ENCODE measurements at regions of chr7 and their contacts with region 1.

Region 1: GRCh38 chr7:39517240-39517639 is 49.0 kb upstream of the YAE1 start:
- DNase-seq: no peak
- ATAC-seq: no peak
- H3K4me3 ChIP-seq: no peak overlapping the region
- H3K27ac ChIP-seq: no peak overlapping the region
- H3K4me1 ChIP-seq: no peaks in the 10 kb centered on the region
- H3K27me3 ChIP-seq: no peaks in the 10 kb centered on the region; a peak in 1 of 4 replicates
- CTCF ChIP-seq: no peak
- EP300 ChIP-seq: no peak
- POLR2A ChIP-seq: no peak
- RAD21 ChIP-seq: no peak

Region 2: DNA sequence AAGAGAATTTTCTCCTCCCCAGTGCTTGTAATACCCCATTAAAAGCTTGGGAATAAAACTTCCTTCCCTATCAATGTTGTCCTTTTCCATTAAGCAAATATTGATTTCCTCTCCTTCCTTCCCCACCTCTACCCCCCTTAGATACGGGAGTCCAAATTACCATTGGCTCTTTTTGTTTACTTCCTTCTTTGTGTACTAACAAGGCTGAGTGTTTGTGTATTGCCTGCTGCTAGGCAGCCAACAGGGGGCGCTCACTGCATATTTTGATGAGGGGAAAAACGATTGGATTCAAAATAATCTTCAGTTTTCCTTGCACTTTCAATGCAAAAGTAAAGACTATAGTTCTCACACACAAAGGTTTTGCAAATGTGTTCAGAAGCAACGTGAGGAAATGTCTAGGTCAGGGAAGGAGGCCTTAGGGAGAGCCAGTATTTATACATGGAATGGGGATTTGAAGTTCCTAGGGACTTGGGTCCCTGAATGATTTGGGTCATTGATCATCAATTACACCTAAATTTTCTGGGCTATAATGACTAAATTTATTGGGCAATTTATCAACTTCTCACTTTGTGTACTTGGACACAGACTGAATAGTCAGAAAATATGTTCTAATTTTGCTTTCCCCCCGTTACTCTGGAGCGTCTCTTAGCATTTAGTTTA is 584.6 kb before region 1 on chr7:
- CTCF ChIA-PET with region 1: interaction called, 3 read pairs
- POLR2A ChIA-PET with region 1: no interaction called
- RAD21 ChIA-PET with region 1: interaction called, 3 read pairs
- SMC1A ChIA-PET with region 1: interaction called, 4 read pairs
- in situ Hi-C with region 1: loop called (anchors 5 kb)
- intact Hi-C with region 1: loop called (anchors 1 kb)
- DNase-seq: peak; percentile 16
- ATAC-seq: peak; percentile 92
- H3K4me3 ChIP-seq: no peak overlapping the region
- H3K27ac ChIP-seq: no peak overlapping the region
- H3K4me1 ChIP-seq: no peaks in the 10 kb centered on the region
- H3K27me3 ChIP-seq: no peaks in the 10 kb centered on the region
- CTCF ChIP-seq: peak; percentile 81 to 96 (median 90)
- EP300 ChIP-seq: no peak
- POLR2A ChIP-seq: no peak
- RAD21 ChIP-seq: peak; percentile 80

Region 3: GRCh38 chr7:39453743-39454355 is 63.4 kb before region 1 on chr7:
- CTCF ChIA-PET with region 1: no interaction called
- POLR2A ChIA-PET with region 1: no interaction called
- RAD21 ChIA-PET with region 1: interaction called, 3 read pairs
- SMC1A ChIA-PET with region 1: no interaction called
- in situ Hi-C with region 1: no loop called
- intact Hi-C with region 1: loop called (anchors 1 kb)
- DNase-seq: peak; percentile 23
- ATAC-seq: peak; percentile 95
- H3K4me3 ChIP-seq: no peak overlapping the region
- H3K27ac ChIP-seq: no peak overlapping the region
- H3K4me1 ChIP-seq: no peaks in the 10 kb centered on the region
- H3K27me3 ChIP-seq: peaks cover 0 to 6% of the 10 kb centered on the region in 2 experiments; a peak in 1 of 4 replicates
- CTCF ChIP-seq: peak; percentile 68 to 96 (median 93)
- EP300 ChIP-seq: no peak
- POLR2A ChIP-seq: no peak
- RAD21 ChIP-seq: peak; percentile 57

Region 4: GRCh38 chr7:39589323-39590111 is 72.3 kb after region 1 on chr7:
- CTCF ChIA-PET with region 1: no interaction called
- POLR2A ChIA-PET with region 1: no interaction called
- RAD21 ChIA-PET with region 1: no interaction called
- SMC1A ChIA-PET with region 1: no interaction called
- in situ Hi-C with region 1: no loop called
- intact Hi-C with region 1: no loop called
- DNase-seq: peak; percentile 45
- ATAC-seq: peak; percentile 94
- H3K4me3 ChIP-seq: no peak overlapping the region
- H3K27ac ChIP-seq: no peak overlapping the region
- H3K4me1 ChIP-seq: peaks cover 5% of the 10 kb centered on the region; the same call in 1 of the 2 replicates
- H3K27me3 ChIP-seq: no peaks in the 10 kb centered on the region
- CTCF ChIP-seq: no peak
- EP300 ChIP-seq: peak; percentile 90 to 96
- POLR2A ChIP-seq: no peak
- RAD21 ChIP-seq: no peak

Region 5: GRCh38 chr7:39951156-39951942 is 434.1 kb after region 1 on chr7:
- CTCF ChIA-PET with region 1: no interaction called
- POLR2A ChIA-PET with region 1: no interaction called
- RAD21 ChIA-PET with region 1: no interaction called
- SMC1A ChIA-PET with region 1: no interaction called
- in situ Hi-C with region 1: no loop called
- intact Hi-C with region 1: no loop called
- DNase-seq: no peak
- ATAC-seq: peak; percentile 40
- H3K4me3 ChIP-seq: peak overlapping the region; percentile 93
- H3K27ac ChIP-seq: peak overlapping the region; percentile 98
- H3K4me1 ChIP-seq: peaks cover 9% of the 10 kb centered on the region; the same call in 1 of the 2 replicates
- H3K27me3 ChIP-seq: no peaks in the 10 kb centered on the region
- CTCF ChIP-seq: peak; percentile 45 to 77 (median 57); a peak in 5 of 6 replicates
- EP300 ChIP-seq: no peak
- POLR2A ChIP-seq: peak; percentile 69
- RAD21 ChIP-seq: peak; percentile 39; the same call in 1 of the 2 replicates

Measured in GM12878 (cell line).